Naive thymus-derived CD4-positive, alpha-beta T cell (primary cell): ENCODE measurements at regions of chr7 and their contacts with region 1.

Region 1: GRCh38 chr7:65981965-65982792 is at the start of gene GUSB:
- DNase-seq: peak; percentile 80 to 91 (median 86)
- ATAC-seq: peak; percentile 87
- H3K4me3 ChIP-seq: peak within 1 kb of the TSS; percentile 88
- H3K4me3 Mint-ChIP-seq: peak within 1 kb of the TSS; percentile 76 to 91 (median 80)
- H3K27ac ChIP-seq: peak within 1 kb of the TSS; percentile 78
- H3K27ac Mint-ChIP-seq: peak within 1 kb of the TSS; percentile 36 to 91 (median 64)
- H3K4me1 ChIP-seq: peaks cover 15 to 19% of the 10 kb centered on the region in 2 donors
- H3K4me1 Mint-ChIP-seq: peaks cover 0 to 21% (median 10%) of the 10 kb centered on the region in 7 donors
- H3K27me3 ChIP-seq: no peaks in the 10 kb centered on the region
- H3K27me3 Mint-ChIP-seq: no peaks in the 10 kb centered on the region
- total RNA-seq, gene GUSB: 41.8 to 62.5 (median 53.3) TPM

Region 2: DNA sequence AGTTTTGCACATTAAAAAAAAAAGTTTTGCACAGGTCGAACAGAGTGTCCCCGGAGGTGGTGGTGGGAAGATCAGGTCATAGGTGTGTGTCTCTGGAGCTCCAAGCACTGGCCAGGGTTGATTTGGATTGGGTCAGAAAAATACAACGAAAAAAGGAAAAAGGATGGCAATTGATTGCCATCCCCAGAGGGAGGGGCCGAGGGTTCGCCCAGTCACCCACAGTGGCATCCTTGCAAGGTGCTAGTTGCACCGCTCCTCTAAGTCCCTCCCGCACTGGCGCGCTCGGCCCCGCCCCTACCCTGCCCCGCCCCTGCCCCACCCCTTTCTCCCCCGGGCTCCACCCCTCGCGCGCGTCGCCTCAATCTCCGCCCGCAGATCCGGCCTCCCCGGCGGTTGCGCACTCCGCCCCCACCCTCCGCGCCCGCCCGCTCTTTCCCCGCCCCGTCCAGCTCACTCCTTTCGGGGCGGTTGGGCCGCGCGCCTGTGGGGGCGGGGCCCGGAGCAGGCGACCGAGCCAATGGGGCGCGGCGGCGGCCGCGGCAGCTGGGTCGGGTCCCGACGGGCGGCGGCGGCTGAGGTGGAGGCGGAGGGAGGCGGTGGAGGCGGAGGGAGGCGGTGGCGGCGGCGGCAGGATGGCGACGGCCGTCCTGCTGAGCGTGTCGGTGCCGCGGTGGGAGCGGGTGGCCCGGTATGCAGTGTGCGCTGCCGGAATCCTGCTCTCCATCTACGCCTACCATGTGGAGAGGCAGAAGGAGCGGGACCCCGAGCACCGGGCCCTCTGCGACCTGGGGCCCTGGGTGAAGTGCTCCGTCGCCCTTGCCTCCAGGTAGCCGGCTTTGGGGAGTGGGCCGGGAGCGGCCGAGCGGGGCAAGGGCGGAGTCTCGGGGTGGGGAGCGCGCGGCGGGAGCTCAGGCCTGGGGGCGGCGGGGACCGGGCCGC is 944.2 kb before region 1 on chr7:
- CTCF ChIA-PET with region 1: no interaction called
- POLR2A ChIA-PET with region 1: no interaction called
- intact Hi-C with region 1: loop called in 1 of 2 experiments (anchors 5 kb)
- DNase-seq: peak; percentile 85 to 92 (median 88)
- ATAC-seq: peak; percentile 95
- H3K4me3 ChIP-seq: no peak overlapping the region
- H3K4me3 Mint-ChIP-seq: peak overlapping the region; percentile 77 to 87 (median 82)
- H3K27ac ChIP-seq: peak overlapping the region; percentile 80
- H3K27ac Mint-ChIP-seq: peak overlapping the region; percentile 10 to 91 (median 83)
- H3K4me1 ChIP-seq: peaks cover 0 to 8% of the 10 kb centered on the region in 2 donors
- H3K4me1 Mint-ChIP-seq: peaks cover 7 to 18% (median 15%) of the 10 kb centered on the region in 7 donors
- H3K27me3 ChIP-seq: no peaks in the 10 kb centered on the region
- H3K27me3 Mint-ChIP-seq: no peaks in the 10 kb centered on the region

Region 3: DNA sequence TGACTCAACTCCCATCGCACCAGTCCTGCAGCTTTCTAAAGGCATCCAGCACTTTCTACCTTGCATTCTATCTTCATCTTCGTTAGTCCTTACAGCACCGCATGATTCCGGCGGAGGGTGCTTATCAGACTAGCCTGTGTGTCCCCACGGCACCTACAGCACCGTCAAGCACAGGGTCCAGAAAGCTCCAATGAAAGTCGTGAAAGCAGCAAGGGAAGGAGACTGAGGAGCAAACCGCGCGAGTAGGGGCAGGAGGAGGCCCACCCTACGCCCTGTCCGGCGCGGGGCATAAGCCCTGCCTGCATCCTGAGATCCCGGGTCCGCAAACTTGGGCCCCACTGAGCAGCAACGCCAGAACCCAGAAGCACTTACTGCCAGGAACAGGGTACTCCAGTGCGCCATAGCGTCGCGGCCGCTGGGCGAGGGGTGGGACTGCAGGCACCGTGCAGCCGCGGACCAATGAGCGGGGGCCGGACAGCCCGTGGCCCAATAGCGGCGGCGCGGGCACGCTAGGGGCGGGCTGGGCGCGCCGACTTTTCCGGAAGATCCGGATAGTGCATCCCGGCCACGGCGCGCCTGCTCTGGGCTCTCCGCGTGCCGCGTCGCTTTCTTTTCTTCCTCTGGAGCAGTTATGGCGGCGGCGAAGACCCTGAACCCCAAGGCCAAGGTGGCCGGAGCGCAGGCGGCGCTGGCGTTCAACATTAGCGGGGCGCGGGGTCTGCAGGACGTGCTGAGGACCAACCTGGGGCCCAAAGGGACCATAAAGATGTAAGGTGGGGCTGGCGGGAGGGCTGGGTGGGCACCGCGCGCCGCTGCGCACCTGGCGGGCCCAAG is 231.5 kb before region 1 on chr7:
- CTCF ChIA-PET with region 1: no interaction called
- POLR2A ChIA-PET with region 1: no interaction called
- intact Hi-C with region 1: loop called (anchors 1 kb)
- DNase-seq: peak; percentile 76 to 91 (median 80)
- ATAC-seq: peak; percentile 99
- H3K4me3 ChIP-seq: peak overlapping the region; percentile 97
- H3K4me3 Mint-ChIP-seq: peak overlapping the region; percentile 90 to 100 (median 98)
- H3K27ac ChIP-seq: peak overlapping the region; percentile 85
- H3K27ac Mint-ChIP-seq: peak overlapping the region; percentile 75 to 95 (median 87)
- H3K4me1 ChIP-seq: peaks cover 6 to 7% of the 10 kb centered on the region in 2 donors
- H3K4me1 Mint-ChIP-seq: peaks cover 0 to 35% (median 20%) of the 10 kb centered on the region in 7 donors
- H3K27me3 ChIP-seq: no peaks in the 10 kb centered on the region
- H3K27me3 Mint-ChIP-seq: no peaks in the 10 kb centered on the region

Region 4: DNA sequence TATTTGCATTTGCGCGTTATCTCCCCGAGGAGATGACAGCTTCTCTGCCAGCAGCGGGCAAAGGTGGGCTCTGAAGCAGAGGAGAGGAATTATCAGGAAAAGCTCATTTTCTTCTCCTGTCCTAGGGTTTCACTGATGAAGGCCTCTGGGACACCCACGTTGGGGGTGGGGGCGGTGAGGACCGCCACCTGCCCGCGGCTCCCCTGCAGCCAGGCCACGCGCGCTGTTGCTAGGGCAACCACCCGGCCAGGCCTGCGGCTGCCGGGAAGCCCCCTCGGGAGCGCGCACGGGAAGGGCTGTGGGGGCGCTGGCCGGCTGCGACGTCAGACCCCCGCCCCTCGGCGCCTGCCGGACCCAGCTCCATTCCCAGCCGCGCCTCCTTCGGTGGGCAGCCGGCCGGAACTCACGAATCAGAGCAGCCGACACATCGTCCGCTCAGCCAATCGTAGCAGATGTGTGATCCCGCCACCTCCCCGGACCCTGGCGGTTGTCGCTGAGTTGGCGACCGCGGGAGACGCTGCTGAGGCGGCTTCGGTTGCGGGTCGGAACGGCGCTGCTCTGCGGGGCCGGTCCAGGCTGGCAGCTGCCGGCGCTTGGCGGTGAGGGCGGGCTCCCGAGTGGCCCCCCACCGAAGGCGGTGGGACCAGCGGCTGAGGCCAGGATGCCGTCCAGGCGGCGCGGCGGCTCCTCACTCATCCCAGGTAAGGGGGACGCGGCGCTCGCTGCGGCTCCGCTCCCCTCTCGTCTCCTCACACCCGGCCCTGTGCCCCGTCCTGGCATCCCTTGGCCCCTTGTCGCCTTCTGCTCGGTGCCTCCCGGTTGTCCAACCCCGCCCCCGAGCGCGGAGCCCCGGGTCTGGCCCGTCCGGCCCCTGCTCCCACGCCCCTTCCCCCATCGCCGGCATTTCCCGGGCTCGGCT is 222.9 kb after region 1 on chr7 and contains the start of gene TPST1:
- CTCF ChIA-PET with region 1: no interaction called
- POLR2A ChIA-PET with region 1: interaction called, 4 read pairs
- intact Hi-C with region 1: loop called (anchors 2 to 10 kb)
- DNase-seq: peak; percentile 69 to 83 (median 78)
- ATAC-seq: peak; percentile 94
- H3K4me3 ChIP-seq: peak within 1 kb of the TSS; percentile 49
- H3K4me3 Mint-ChIP-seq: peak within 1 kb of the TSS; percentile 90 to 98 (median 92)
- H3K27ac ChIP-seq: peak within 1 kb of the TSS; percentile 60
- H3K27ac Mint-ChIP-seq: peak within 1 kb of the TSS in 8 of 9 donors; percentile 75 to 91 (median 83)
- H3K4me1 ChIP-seq: peaks cover 0 to 30% of the 10 kb centered on the region in 2 donors
- H3K4me1 Mint-ChIP-seq: peaks cover 26 to 57% (median 46%) of the 10 kb centered on the region in 7 donors
- H3K27me3 ChIP-seq: no peaks in the 10 kb centered on the region
- H3K27me3 Mint-ChIP-seq: peaks cover 0 to 48% (median 6%) of the 10 kb centered on the region in 5 donors
- total RNA-seq, gene TPST1: 0.70 to 5.0 (median 2.7) TPM

Region 5: GRCh38 chr7:66844552-66845378 is 862.6 kb after region 1 on chr7:
- CTCF ChIA-PET with region 1: no interaction called
- POLR2A ChIA-PET with region 1: no interaction called
- intact Hi-C with region 1: loop called (anchors 2 to 5 kb)
- DNase-seq: peak; percentile 96 to 100 (median 100)
- ATAC-seq: peak; percentile 95
- H3K4me3 ChIP-seq: peak overlapping the region; percentile 99
- H3K4me3 Mint-ChIP-seq: peak overlapping the region; percentile 88 to 100 (median 96)
- H3K27ac ChIP-seq: peak overlapping the region; percentile 90
- H3K27ac Mint-ChIP-seq: peak overlapping the region; percentile 98 to 100 (median 100)
- H3K4me1 ChIP-seq: peaks cover 5 to 11% of the 10 kb centered on the region in 2 donors
- H3K4me1 Mint-ChIP-seq: peaks cover 10 to 29% (median 26%) of the 10 kb centered on the region in 7 donors
- H3K27me3 ChIP-seq: no peaks in the 10 kb centered on the region
- H3K27me3 Mint-ChIP-seq: peaks cover 0 to 3% (median 0%) of the 10 kb centered on the region in 5 donors